ENCODE measurements at regions of chr1 and their contacts with region 1.

Region 1: GRCh38 chr1:34597877-34598514 is 156.9 kb upstream of the GJB5 start:
- DNase-seq: no peak

Region 2: GRCh38 chr1:33641104-33641830 is 956.7 kb before region 1 on chr1:
- intact Hi-C with region 1: loop called (anchors 5 kb)
- DNase-seq: no peak